ENCODE measurements at regions of chr14 and their contacts with region 1.

Region 1: GRCh38 chr14:77151918-77152588 is 10.5 kb upstream of the ZDHHC22 start:
- DNase-seq: no peak
- H3K4me3 Mint-ChIP-seq: no peak overlapping the region
- H3K27ac Mint-ChIP-seq: no peak overlapping the region
- H3K4me1 Mint-ChIP-seq: no peaks in the 10 kb centered on the region
- H3K27me3 Mint-ChIP-seq: peaks cover 20% of the 10 kb centered on the region

Region 2: GRCh38 chr14:76701981-76702380 is 450.1 kb before region 1 on chr14:
- intact Hi-C with region 1: no loop called
- DNase-seq: no peak
- H3K4me3 Mint-ChIP-seq: no peak overlapping the region
- H3K27ac Mint-ChIP-seq: no peak overlapping the region
- H3K4me1 Mint-ChIP-seq: no peaks in the 10 kb centered on the region
- H3K27me3 Mint-ChIP-seq: peaks cover 1% of the 10 kb centered on the region

Region 3: GRCh38 chr14:77212943-77213678 is 61.1 kb after region 1 on chr14:
- intact Hi-C with region 1: loop called (anchors 1 kb)
- DNase-seq: peak; percentile 9
- H3K4me3 Mint-ChIP-seq: no peak overlapping the region
- H3K27ac Mint-ChIP-seq: no peak overlapping the region
- H3K4me1 Mint-ChIP-seq: no peaks in the 10 kb centered on the region
- H3K27me3 Mint-ChIP-seq: peaks cover 13% of the 10 kb centered on the region

Measured in activated T-helper 1 cell treated with anti-CD3 and anti-CD28 coated beads, Interleukin-12 subunit alpha, Interleukin-12 subunit beta, Interleukin-2, Interleukin-4 antibody, amounts not matched to agents 30 ng/mL and 10 ng/mL and 1 ng/mL, durations not matched to agents 14 hours and 24 hours and 36 hours (primary cell).